K562 (cell line): ENCODE measurements at regions of chr2 and their contacts with region 1.

Region 1: GRCh38 chr2:179991344-179991743 is 15.8 kb downstream of the CWC22 start:
- DNase-seq: peak in 2 of 4 experiments; percentile 25 to 38
- ATAC-seq: peak; percentile 84
- H3K4me3 ChIP-seq: no peak overlapping the region
- H3K27ac ChIP-seq: no peak overlapping the region
- H3K4me1 ChIP-seq: no peaks in the 10 kb centered on the region; a peak in 2 of 5 replicates
- H3K27me3 ChIP-seq: no peaks in the 10 kb centered on the region
- CTCF ChIP-seq: peak; percentile 39 to 44 (median 41); a peak in 4 of 6 replicates
- EP300 ChIP-seq: no peak
- POLR2A ChIP-seq: no peak
- RAD21 ChIP-seq: peak in 1 of 2 experiments; percentile 49; a peak in 3 of 4 replicates

Region 2: GRCh38 chr2:179884193-179884592 is 107.2 kb before region 1 on chr2:
- CTCF ChIA-PET with region 1: no interaction called
- POLR2A ChIA-PET with region 1: no interaction called
- in situ Hi-C with region 1: no loop called
- intact Hi-C with region 1: no loop called
- DNase-seq: no peak
- ATAC-seq: peak; percentile 46; the same call in 2 of the 3 replicates
- H3K4me3 ChIP-seq: no peak overlapping the region
- H3K27ac ChIP-seq: no peak overlapping the region
- H3K4me1 ChIP-seq: no peaks in the 10 kb centered on the region
- H3K27me3 ChIP-seq: no peaks in the 10 kb centered on the region
- CTCF ChIP-seq: no peak
- EP300 ChIP-seq: no peak
- POLR2A ChIP-seq: no peak
- RAD21 ChIP-seq: no peak

Region 3: DNA sequence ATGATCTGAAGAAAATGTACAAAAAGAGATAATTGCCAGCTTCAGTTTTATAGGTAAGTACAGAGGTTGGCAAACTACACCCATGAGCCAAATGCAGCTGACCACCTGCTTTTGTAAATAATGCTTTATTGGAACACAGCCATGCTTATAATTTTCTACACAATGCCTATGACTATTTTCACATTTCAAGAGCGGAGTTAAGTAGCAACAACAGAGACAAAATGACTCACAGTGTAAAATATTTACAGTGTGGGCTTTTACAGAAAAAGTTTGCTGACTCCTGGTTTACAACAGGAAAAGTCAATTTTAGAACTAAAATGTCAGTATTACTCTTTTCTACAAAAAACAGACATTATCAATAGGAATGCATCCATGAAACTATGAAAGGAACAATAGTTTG is 10.3 kb before region 1 on chr2:
- CTCF ChIA-PET with region 1: no interaction called
- POLR2A ChIA-PET with region 1: no interaction called
- in situ Hi-C with region 1: no loop called
- intact Hi-C with region 1: no loop called
- DNase-seq: no peak
- ATAC-seq: no peak
- H3K4me3 ChIP-seq: no peak overlapping the region
- H3K27ac ChIP-seq: no peak overlapping the region
- H3K4me1 ChIP-seq: no peaks in the 10 kb centered on the region
- H3K27me3 ChIP-seq: no peaks in the 10 kb centered on the region
- CTCF ChIP-seq: no peak
- EP300 ChIP-seq: no peak
- POLR2A ChIP-seq: no peak
- RAD21 ChIP-seq: no peak

Region 4: GRCh38 chr2:180006781-180007579 is 15.6 kb after region 1 on chr2 and contains the start of gene CWC22:
- CTCF ChIA-PET with region 1: no interaction called
- POLR2A ChIA-PET with region 1: interaction called, 16 read pairs
- in situ Hi-C with region 1: no loop called
- intact Hi-C with region 1: no loop called
- DNase-seq: peak; percentile 76 to 96 (median 79)
- ATAC-seq: peak; percentile 93
- H3K4me3 ChIP-seq: peak within 1 kb of the TSS; percentile 65
- H3K27ac ChIP-seq: peak within 1 kb of the TSS; percentile 100
- H3K4me1 ChIP-seq: peaks cover 0 to 25% of the 10 kb centered on the region in 2 experiments; a peak in 4 of 5 replicates
- H3K27me3 ChIP-seq: no peaks in the 10 kb centered on the region
- CTCF ChIP-seq: peak in 1 of 3 experiments; percentile 11; a peak in 1 of 6 replicates
- EP300 ChIP-seq: peak; percentile 21; the same call in 1 of the 2 replicates
- POLR2A ChIP-seq: peak; percentile 95
- RAD21 ChIP-seq: 0 out of 4 replicates have a peak, but pooled peaks of 1 of the 2 experiments have one; percentile 14
- polyA plus RNA-seq, gene CWC22: 40.6 to 53.9 TPM

Region 5: GRCh38 chr2:180056367-180057118 is 65.2 kb after region 1 on chr2:
- CTCF ChIA-PET with region 1: no interaction called
- POLR2A ChIA-PET with region 1: no interaction called
- in situ Hi-C with region 1: no loop called
- intact Hi-C with region 1: loop called (anchors 5 kb)
- DNase-seq: peak in 1 of 4 experiments; percentile 7
- ATAC-seq: 0 out of 3 replicates have a peak, but pooled peaks have one; percentile 37
- H3K4me3 ChIP-seq: no peak overlapping the region
- H3K27ac ChIP-seq: no peak overlapping the region
- H3K4me1 ChIP-seq: no peaks in the 10 kb centered on the region; a peak in 1 of 5 replicates
- H3K27me3 ChIP-seq: peaks cover 5 to 10% of the 10 kb centered on the region in 2 experiments; a peak in 2 of 5 replicates
- CTCF ChIP-seq: no peak
- EP300 ChIP-seq: no peak
- POLR2A ChIP-seq: no peak
- RAD21 ChIP-seq: no peak